ENCODE measurements at regions of chr12 and their contacts with region 1.

Region 1: GRCh38 chr12:82608706-82609105 is 78.0 kb upstream of the TMTC2 start:
- DNase-seq: no peak
- ATAC-seq: no peak

Region 2: GRCh38 chr12:84416626-84417025 is 1807.9 kb after region 1 on chr12:
- intact Hi-C with region 1: loop called (anchors 5 kb)
- DNase-seq: no peak
- ATAC-seq: no peak

Measured in sciatic nerve (tissue), 2 donors.